Left cardiac atrium (tissue), 4 donors: ENCODE measurements at regions of chr2 and their contacts with region 1.

Region 1: GRCh38 chr2:60550178-60550983 is 3.1 kb downstream of the BCL11A start:
- DNase-seq: peak; percentile 63
- ATAC-seq: peak; percentile 77 to 84

Region 2: DNA sequence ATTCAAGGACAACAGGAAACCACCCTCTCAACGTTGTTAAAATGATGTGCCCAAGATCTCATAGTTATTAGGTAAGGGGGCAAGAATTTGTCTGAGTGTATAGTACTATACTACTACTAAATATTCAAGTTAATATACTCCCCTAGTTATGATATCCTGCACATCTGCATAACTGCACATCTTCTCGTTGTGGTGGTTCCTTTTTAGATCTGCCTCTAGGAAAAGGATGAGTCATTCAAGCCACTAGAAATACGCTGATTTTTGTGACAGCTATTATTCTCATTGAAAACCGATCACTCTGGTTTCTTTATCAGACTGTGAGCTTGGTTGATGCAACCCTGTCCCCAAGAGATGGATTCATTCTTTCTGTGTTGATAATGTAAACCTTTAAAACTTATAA is 1242.3 kb before region 1 on chr2:
- intact Hi-C with region 1: loop called in 1 of 2 experiments (anchors 5 kb)
- DNase-seq: no peak
- ATAC-seq: no peak

Region 3: DNA sequence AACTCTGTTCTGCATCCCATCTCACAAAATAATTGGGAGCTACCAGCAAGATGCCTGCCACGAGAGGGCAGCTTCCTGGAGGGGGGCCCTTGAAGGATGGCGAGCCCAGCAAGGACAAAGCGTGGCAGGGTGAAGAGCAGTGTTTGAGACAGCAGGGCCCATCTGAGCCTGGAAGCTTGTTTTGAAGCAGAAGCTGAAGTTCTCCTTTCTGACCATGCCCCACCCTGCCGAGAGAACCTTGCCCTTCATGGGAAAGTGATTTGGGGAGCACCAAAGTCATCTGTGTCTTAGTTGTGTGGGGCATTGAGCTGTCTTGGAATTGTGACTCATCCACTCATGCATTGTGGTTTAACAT is 213.3 kb before region 1 on chr2:
- intact Hi-C with region 1: loop called in 1 of 2 experiments (anchors 10 kb)
- DNase-seq: no peak
- ATAC-seq: peak; percentile 27 to 48